Activated CD4-positive, alpha-beta memory T cell treated with anti-CD3 and anti-CD28 coated beads for 36 hours (primary cell): ENCODE measurements at regions of chr1 and their contacts with region 1.

Region 1: DNA sequence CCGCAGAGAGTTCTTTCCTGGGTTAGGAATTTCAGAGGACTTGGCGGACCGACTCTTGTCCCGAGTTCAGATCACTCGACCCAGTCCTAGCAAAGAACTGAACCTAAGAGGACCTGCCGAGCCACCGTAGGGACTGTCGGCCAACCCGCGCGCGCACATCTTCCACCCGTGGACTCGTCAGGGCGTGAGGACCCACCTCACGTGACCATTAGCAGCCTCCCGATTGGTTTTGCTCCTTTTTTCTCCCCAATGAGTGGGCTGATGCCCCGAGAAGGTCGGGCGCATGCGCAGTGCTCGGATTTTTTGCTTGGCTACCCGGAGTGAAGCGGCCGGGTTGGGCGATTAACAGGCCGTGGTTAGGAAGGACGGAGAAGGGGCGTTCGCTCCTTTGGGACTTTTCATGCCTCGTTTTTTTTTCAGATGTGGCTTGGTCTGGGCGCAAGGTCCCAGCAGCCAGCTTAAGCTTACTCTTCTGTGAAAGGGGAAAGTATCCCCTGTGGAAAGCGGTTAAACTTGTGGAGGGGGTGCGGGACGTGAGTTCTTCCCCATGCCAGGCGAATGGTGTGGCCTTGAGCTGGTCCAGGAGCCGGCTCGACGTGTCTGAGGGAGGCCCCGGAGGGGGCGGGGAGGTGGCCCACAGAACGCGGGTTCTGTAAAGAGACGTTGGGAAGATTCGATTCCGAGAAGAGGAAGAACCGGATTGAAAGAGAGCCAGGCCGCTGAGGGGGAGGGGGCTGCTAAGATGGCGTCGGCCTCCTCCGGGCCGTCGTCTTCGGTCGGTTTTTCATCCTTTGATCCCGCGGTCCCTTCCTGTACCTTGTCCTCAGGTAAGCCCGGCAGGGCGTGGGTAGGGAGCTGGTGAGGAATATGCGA is at the start of gene PIP5K1A:
- DNase-seq: peak; percentile 99
- H3K4me3 Mint-ChIP-seq: peak within 1 kb of the TSS; percentile 99
- H3K27ac Mint-ChIP-seq: peak within 1 kb of the TSS; percentile 96
- H3K4me1 Mint-ChIP-seq: peaks cover 37% of the 10 kb centered on the region
- H3K27me3 Mint-ChIP-seq: no peaks in the 10 kb centered on the region
- total RNA-seq, gene PIP5K1A: 78.6 to 84.3 TPM

Region 2: GRCh38 chr1:150225546-150225945 is 972.9 kb before region 1 on chr1:
- CTCF ChIA-PET with region 1: no interaction called
- POLR2A ChIA-PET with region 1: no interaction called
- intact Hi-C with region 1: no loop called
- DNase-seq: no peak
- H3K4me3 Mint-ChIP-seq: no peak overlapping the region
- H3K27ac Mint-ChIP-seq: no peak overlapping the region
- H3K4me1 Mint-ChIP-seq: peaks cover 2% of the 10 kb centered on the region
- H3K27me3 Mint-ChIP-seq: no peaks in the 10 kb centered on the region

Region 3: DNA sequence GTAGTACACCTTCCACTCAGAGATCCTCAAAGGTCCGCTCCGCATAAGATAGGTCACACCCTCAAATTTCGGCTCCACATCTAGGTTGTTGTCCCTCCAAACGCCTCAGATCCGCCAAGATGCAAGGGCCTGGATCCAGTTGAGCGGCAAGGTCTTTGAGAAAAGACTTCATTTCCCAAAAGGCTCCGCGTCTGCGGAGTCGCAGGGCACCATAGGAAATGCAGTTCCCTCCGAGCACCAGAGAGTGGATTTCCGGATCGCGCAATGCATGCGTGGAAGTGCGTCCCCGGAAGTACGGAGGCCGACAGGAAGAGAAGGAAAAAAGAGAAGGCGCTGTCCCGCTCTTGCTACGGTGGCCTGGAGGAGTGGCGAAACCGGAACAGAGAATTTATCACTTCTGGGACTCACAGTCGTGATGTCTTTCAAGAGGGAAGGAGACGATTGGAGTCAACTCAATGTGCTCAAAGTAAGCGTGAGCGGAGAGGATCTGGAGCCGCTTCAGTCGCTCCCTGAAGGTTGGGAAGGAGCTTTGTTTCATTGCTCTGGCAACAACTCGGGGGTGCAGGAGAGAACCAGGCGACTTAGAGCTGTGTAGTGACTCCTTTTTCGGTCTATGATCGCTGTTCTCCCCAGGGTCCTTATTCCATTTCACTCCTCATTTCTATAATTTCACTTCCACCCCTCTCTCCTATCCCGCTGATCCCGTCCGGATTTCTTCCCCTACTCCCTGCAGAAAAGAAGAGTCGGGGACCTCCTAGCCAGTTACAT is 32.6 kb before region 1 on chr1 and contains the starts of genes LYSMD1 and SCNM1:
- CTCF ChIA-PET with region 1: no interaction called
- POLR2A ChIA-PET with region 1: interaction called, 3 read pairs
- intact Hi-C with region 1: loop called (anchors 1 kb)
- DNase-seq: peak; percentile 99
- H3K4me3 Mint-ChIP-seq: peak within 1 kb of the TSS; percentile 92
- H3K27ac Mint-ChIP-seq: peak within 1 kb of the TSS; percentile 92
- H3K4me1 Mint-ChIP-seq: peaks cover 49% of the 10 kb centered on the region
- H3K27me3 Mint-ChIP-seq: peaks cover 2% of the 10 kb centered on the region
- total RNA-seq, gene LYSMD1: 1.8 to 2.6 TPM
- total RNA-seq, gene SCNM1: 67.5 to 67.8 TPM

Region 4: DNA sequence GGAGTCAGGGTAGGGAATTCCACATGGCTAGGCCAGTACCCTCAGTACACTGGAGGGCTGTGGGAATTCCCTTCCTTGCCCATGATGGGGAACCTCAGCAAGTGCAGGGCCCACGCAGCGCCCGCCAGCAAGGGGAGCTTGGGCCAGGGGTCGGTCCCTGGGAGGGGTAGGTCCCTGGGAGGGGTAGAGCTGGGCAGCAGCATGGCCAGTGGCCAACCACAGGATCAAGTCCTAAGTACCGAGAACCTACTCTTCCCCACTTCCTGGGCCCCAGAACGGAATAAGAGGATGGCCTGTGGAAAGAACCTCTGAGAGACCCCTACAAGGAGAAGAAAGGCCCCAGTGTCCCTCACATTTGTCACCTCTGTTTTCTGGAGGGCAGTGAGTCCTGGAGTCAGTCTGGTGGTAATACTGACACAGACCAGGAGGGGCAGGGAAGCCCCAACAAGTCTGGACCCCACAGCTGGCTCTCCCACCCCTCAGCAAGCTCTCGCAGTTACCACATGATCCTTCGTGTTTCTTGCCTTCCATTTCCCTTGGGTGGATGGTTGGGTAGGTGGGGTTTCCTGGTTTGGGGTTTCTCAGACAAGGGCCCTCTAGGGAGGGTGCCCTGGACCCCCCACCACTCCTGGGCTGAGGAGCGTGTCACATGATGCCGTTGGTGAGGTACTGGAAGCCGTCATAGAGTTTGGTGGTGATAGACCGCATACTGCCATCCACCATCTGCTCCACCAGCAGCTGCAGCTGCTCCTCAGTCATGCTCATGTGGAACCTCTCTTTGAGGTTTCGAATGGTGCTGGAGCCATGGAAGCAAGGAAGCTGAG is 93.9 kb after region 1 on chr1:
- CTCF ChIA-PET with region 1: no interaction called
- POLR2A ChIA-PET with region 1: no interaction called
- intact Hi-C with region 1: no loop called
- DNase-seq: no peak
- H3K4me3 Mint-ChIP-seq: no peak overlapping the region
- H3K27ac Mint-ChIP-seq: no peak overlapping the region
- H3K4me1 Mint-ChIP-seq: peaks cover 3% of the 10 kb centered on the region
- H3K27me3 Mint-ChIP-seq: no peaks in the 10 kb centered on the region

Region 5: GRCh38 chr1:151327223-151327902 is 128.9 kb after region 1 on chr1 and contains the start of gene PI4KB:
- CTCF ChIA-PET with region 1: no interaction called
- POLR2A ChIA-PET with region 1: no interaction called
- intact Hi-C with region 1: loop called (anchors 5 kb)
- DNase-seq: peak; percentile 93
- H3K4me3 Mint-ChIP-seq: peak within 1 kb of the TSS; percentile 95
- H3K27ac Mint-ChIP-seq: peak within 1 kb of the TSS; percentile 89
- H3K4me1 Mint-ChIP-seq: peaks cover 32% of the 10 kb centered on the region
- H3K27me3 Mint-ChIP-seq: no peaks in the 10 kb centered on the region
- total RNA-seq, gene PI4KB: 54.7 to 62.9 TPM

Region 6: GRCh38 chr1:151399890-151400495 is 201.5 kb after region 1 on chr1:
- CTCF ChIA-PET with region 1: no interaction called
- POLR2A ChIA-PET with region 1: no interaction called
- intact Hi-C with region 1: loop called (anchors 5 kb)
- DNase-seq: peak; percentile 37
- H3K4me3 Mint-ChIP-seq: peak overlapping the region; percentile 88
- H3K27ac Mint-ChIP-seq: peak overlapping the region; percentile 95
- H3K4me1 Mint-ChIP-seq: peaks cover 29% of the 10 kb centered on the region
- H3K27me3 Mint-ChIP-seq: no peaks in the 10 kb centered on the region